ENCODE measurements at regions of chr4 and their contacts with region 1.

Region 1: GRCh38 chr4:15805583-15806517 is 27.7 kb downstream of the CD38 start:
- DNase-seq: peak; percentile 28
- ATAC-seq: peak; percentile 90
- H3K4me3 Mint-ChIP-seq: no peak overlapping the region
- H3K27ac Mint-ChIP-seq: no peak overlapping the region
- H3K4me1 Mint-ChIP-seq: peaks cover 2% of the 10 kb centered on the region; the same call in 1 of the 2 replicates
- H3K27me3 Mint-ChIP-seq: no peaks in the 10 kb centered on the region
- CTCF ChIP-seq: peak; percentile 53

Region 2: GRCh38 chr4:15778289-15779241 is 27.3 kb before region 1 on chr4 and contains the start of gene CD38:
- CTCF ChIA-PET with region 1: interaction called, 10 read pairs
- POLR2A ChIA-PET with region 1: no interaction called
- DNase-seq: peak; percentile 35
- ATAC-seq: peak; percentile 87
- H3K4me3 Mint-ChIP-seq: peak within 1 kb of the TSS; percentile 74
- H3K27ac Mint-ChIP-seq: no peak within 1 kb of the TSS
- H3K4me1 Mint-ChIP-seq: peaks cover 7% of the 10 kb centered on the region
- H3K27me3 Mint-ChIP-seq: peaks cover 69% of the 10 kb centered on the region
- CTCF ChIP-seq: no peak
- total RNA-seq, gene CD38: 0.17 to 0.39 TPM (median 0.37 TPM) in 3 replicates

Region 3: DNA sequence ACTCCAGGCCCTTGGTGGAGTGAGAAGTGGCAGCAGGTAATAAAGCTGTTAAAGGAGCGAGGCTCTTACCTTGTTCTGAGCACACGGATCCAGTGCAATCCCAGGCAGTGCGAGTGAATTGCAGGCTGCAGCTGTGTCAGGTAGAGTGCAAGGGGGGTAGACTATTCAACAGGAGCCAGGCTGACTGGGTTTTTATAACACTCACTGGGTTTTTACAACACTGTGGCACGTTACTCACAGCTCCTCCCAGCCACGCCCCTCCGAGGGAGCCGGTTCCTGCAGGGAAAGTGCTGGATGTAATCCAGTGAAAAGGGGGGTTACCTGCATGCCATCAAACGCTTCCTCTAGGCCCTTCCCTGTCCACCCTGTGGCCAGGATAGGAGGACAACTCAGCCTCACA is 132.3 kb after region 1 on chr4:
- CTCF ChIA-PET with region 1: interaction called, 19 read pairs
- POLR2A ChIA-PET with region 1: no interaction called
- DNase-seq: peak; percentile 25
- ATAC-seq: peak; percentile 81
- H3K4me3 Mint-ChIP-seq: no peak overlapping the region
- H3K27ac Mint-ChIP-seq: no peak overlapping the region
- H3K4me1 Mint-ChIP-seq: peaks cover 11% of the 10 kb centered on the region
- H3K27me3 Mint-ChIP-seq: no peaks in the 10 kb centered on the region
- CTCF ChIP-seq: no peak

Region 4: DNA sequence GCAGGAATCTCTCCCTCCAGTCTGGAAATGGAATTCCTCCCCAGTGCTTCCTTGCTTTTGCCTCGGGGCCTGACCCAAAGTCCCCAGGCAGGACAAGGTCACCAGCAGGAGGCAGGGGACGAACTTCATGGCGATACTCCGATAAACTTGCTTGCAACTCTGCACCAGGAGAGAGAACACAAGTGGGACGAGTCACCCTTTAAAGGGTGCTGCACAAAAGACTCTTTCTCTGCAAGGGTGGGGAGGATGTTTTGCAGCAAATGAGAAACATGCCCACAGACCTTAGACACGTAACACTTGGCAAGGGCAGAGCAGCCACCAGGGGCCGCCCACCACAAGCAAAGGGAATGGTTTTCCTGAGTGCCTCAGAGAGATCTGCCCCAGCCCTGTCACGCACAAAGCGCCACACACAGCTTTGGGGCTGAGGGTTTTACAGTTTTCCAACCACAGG is 157.2 kb after region 1 on chr4 and contains the start of gene FGFBP2:
- CTCF ChIA-PET with region 1: interaction called, 63 read pairs
- POLR2A ChIA-PET with region 1: no interaction called
- DNase-seq: peak; percentile 73
- ATAC-seq: peak; percentile 88
- H3K4me3 Mint-ChIP-seq: no peak within 1 kb of the TSS
- H3K27ac Mint-ChIP-seq: no peak within 1 kb of the TSS
- H3K4me1 Mint-ChIP-seq: peaks cover 15% of the 10 kb centered on the region
- H3K27me3 Mint-ChIP-seq: no peaks in the 10 kb centered on the region; the same call in 1 of the 2 replicates
- CTCF ChIP-seq: 0 out of 2 replicates have a peak, but pooled peaks have one; percentile 28
- total RNA-seq, gene FGFBP2: 0.24 TPM in 1 of 3 replicates, not detected in the others

Region 5: GRCh38 chr4:16196478-16197393 is 390.9 kb after region 1 on chr4:
- CTCF ChIA-PET with region 1: interaction called, 10 read pairs
- POLR2A ChIA-PET with region 1: no interaction called
- DNase-seq: no peak
- ATAC-seq: peak; percentile 98
- H3K4me3 Mint-ChIP-seq: no peak overlapping the region
- H3K27ac Mint-ChIP-seq: peak overlapping the region; percentile 33
- H3K4me1 Mint-ChIP-seq: peaks cover 31% of the 10 kb centered on the region
- H3K27me3 Mint-ChIP-seq: no peaks in the 10 kb centered on the region
- CTCF ChIP-seq: no peak